ENCODE measurements at regions of chr12 and their contacts with region 1.

Region 1: DNA sequence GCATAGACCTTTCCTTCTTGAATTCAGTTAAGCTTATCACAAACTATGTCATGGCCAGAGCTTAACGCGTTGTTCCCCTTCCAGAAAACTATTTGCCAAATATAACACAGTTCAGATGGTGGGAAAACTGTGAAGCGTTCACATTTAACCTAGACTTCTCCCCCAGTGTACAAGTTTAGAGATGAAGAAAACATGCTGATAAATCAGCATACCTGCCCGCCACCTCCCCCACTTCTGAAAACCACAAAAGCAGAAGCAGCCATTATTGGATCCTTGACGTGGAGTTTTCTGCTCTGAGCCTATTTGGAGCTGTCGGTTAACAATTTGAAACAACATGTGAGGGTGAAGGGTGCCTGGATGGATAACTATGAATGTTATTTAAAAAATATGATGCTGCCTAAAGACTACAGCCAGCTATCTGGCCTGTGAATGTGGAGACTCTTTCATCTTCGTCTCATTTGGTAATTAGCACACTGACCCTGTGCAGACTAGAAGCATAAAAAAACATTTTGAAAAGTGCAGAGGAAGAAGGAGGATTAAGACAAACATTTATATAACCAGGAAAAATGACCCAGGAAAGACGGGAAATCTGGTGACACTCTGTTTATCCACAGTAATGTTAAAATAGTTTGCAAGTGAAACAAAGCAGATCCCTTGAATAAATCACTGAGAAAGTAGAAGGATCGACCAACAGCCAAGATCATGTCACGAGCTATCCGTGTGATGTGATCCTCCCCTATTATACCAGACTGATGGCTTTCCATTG is 408.2 kb downstream of the AEBP2 start:
- DNase-seq: peak; percentile 25 to 55
- ATAC-seq: peak; percentile 77 to 91 (median 88)
- H3K4me3 ChIP-seq: peak overlapping the region in 4 of 10 donors; percentile 8 to 29 (median 17)
- H3K27ac ChIP-seq: peak overlapping the region; percentile 73 to 92 (median 86)
- H3K4me1 ChIP-seq: peaks cover 0 to 27% (median 19%) of the 10 kb centered on the region in 9 donors
- H3K27me3 ChIP-seq: no peaks in the 10 kb centered on the region
- CTCF ChIP-seq: no peak

Region 2: GRCh38 chr12:19546611-19547162 is 300.8 kb before region 1 on chr12:
- intact Hi-C with region 1: no loop called
- DNase-seq: peak in 1 of 2 donors; percentile 21
- ATAC-seq: peak in 7 of 8 donors; percentile 27 to 58 (median 36)
- H3K4me3 ChIP-seq: peak overlapping the region in 5 of 10 donors; percentile 3 to 29 (median 16)
- H3K27ac ChIP-seq: peak overlapping the region in 9 of 10 donors; percentile 38 to 76 (median 65)
- H3K4me1 ChIP-seq: peaks cover 9 to 31% (median 25%) of the 10 kb centered on the region in 9 donors
- H3K27me3 ChIP-seq: no peaks in the 10 kb centered on the region
- CTCF ChIP-seq: no peak

Region 3: GRCh38 chr12:19654650-19655376 is 192.7 kb before region 1 on chr12:
- intact Hi-C with region 1: no loop called
- DNase-seq: no peak
- ATAC-seq: peak in 7 of 8 donors; percentile 25 to 60 (median 47)
- H3K4me3 ChIP-seq: no peak overlapping the region
- H3K27ac ChIP-seq: peak overlapping the region in 5 of 10 donors; percentile 16 to 64 (median 52)
- H3K4me1 ChIP-seq: peaks cover 0 to 10% (median 5%) of the 10 kb centered on the region in 9 donors
- H3K27me3 ChIP-seq: no peaks in the 10 kb centered on the region
- CTCF ChIP-seq: peak in 3 of 9 donors; percentile 12 to 36 (median 12)

Region 4: DNA sequence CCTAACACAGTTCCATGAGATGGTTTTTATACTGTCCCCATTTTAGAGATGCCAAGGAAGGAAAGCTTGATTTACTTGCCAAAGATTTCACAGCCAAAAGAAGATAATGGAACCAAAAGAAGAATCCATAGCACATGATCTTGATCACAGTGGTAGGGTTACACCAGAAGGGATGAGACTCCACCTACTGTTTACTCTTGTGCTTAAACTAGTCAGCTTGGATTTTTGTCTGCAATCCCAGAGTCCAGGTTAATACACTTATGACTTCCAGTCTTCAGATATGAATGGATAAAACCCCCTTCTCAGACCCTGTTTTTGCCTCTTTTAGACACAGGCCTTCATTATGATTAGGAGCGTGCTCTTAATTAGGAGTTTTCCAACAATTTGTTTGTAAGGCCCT is 46.0 kb after region 1 on chr12:
- intact Hi-C with region 1: loop called in 2 of 10 experiments (anchors 5 to 10 kb)
- DNase-seq: no peak
- ATAC-seq: peak in 5 of 8 donors; percentile 61 to 83 (median 63)
- H3K4me3 ChIP-seq: no peak overlapping the region
- H3K27ac ChIP-seq: no peak overlapping the region
- H3K4me1 ChIP-seq: peaks cover 0 to 27% (median 13%) of the 10 kb centered on the region in 9 donors
- H3K27me3 ChIP-seq: no peaks in the 10 kb centered on the region
- CTCF ChIP-seq: peak in 7 of 9 donors; percentile 9 to 54 (median 32)

Region 5: DNA sequence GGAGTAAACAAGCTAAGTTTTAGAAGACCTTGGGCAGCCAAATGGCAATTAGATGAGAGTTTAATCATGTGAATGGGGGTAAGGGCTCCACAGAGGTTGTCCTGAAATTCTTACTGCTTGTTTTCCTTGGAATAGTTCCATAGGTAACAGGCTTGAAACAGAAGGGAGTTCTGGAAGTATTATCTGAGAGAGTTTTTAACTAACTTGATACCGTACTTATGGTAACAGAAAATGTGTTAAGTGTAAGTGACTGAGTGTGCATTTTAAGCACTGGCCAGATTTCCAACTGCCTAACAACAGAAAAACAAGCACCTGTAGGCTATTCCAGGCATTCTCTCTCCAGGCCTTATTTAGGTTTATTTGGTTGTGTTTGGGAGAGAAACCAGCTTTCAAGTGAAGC is 106.3 kb after region 1 on chr12:
- intact Hi-C with region 1: loop called in 1 of 10 experiments (anchors 5 kb)
- DNase-seq: no peak
- ATAC-seq: peak in 7 of 8 donors; percentile 29 to 70 (median 51)
- H3K4me3 ChIP-seq: no peak overlapping the region
- H3K27ac ChIP-seq: peak overlapping the region; percentile 7 to 81 (median 62)
- H3K4me1 ChIP-seq: peaks cover 0 to 21% (median 0%) of the 10 kb centered on the region in 9 donors
- H3K27me3 ChIP-seq: no peaks in the 10 kb centered on the region
- CTCF ChIP-seq: no peak

Region 6: DNA sequence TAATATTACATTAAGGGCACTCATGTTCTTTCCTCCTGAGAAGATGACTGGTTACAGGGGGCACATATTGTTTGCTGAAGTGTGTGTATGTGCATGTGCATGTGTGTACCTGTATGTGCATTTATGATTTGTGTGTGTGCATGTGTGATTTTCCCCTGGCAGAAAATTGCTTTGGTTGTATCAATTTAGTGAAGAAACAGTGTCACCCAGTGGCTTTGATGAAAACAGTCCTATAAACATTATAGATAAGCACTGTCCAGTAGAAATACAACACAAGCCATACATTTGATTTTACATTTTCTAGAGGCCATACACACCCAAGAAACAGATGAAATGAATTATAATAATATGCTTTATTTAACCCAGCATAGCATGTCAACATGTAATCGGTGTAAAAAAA is 529.5 kb after region 1 on chr12:
- intact Hi-C with region 1: loop called in 1 of 10 experiments (anchors 5 kb)
- DNase-seq: no peak
- ATAC-seq: peak in 7 of 8 donors; percentile 23 to 47 (median 36)
- H3K4me3 ChIP-seq: peak overlapping the region in 7 of 10 donors; percentile 2 to 79 (median 68)
- H3K27ac ChIP-seq: peak overlapping the region in 8 of 10 donors; percentile 16 to 97 (median 82)
- H3K4me1 ChIP-seq: peaks cover 0 to 51% (median 7%) of the 10 kb centered on the region in 9 donors
- H3K27me3 ChIP-seq: peaks cover 0 to 12% (median 0%) of the 10 kb centered on the region in 7 donors
- CTCF ChIP-seq: peak; percentile 18 to 58 (median 38)

Measured in heart right ventricle (tissue), 16 donors.